BJ (cell line): ENCODE measurements at regions of chr16 and their contacts with region 1.

Region 1: GRCh38 chr16:3059000-3059722 is 6.3 kb upstream of the IL32 start:
- DNase-seq: peak; percentile 41
- H3K4me3 ChIP-seq: peak overlapping the region; percentile 98
- H3K27me3 ChIP-seq: no peaks in the 10 kb centered on the region
- CTCF ChIP-seq: peak; percentile 51

Region 2: DNA sequence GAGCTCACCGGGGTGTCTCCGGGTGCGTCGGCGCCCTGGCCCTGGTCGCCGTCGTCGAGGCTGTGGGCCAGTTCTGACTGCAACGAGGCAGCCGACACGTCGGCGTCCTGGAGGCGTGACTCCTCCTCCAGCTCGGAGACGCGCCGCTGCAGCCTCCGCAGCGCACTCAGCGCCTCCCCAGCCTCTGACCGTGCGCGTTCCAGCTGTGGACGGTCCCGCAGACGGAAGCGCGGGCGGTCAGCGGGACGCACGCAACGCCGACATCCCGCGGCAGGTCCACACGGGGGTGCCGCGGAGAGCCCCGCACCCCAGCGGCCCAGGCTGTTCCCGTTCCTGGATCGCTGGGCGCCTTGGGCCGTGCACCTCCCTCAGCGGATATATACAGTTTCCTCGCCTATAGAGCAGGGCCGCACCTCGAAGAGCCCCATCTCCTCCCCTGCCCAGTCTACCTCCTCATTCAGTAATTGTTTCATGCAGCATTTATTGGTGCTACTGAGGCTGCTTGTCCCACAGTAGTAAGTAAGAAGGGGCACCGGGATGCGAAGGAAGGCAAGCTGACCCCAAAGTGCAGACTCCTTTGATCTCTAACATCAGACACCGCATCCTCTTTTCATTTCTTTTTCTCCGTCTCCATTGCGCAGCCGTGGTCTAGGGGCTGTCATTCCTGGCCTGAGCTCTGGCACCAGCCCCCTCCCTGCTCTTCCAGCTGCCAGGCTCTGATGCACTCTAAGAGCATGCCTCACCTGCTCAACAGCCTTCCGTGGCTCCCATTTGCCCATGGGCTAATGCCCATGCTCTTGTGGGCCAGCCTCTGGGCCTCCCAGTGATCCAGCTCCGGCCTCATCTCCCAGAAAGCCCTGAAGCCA is 29.4 kb before region 1 on chr16:
- CTCF ChIA-PET with region 1: interaction called, 14 read pairs
- POLR2A ChIA-PET with region 1: no interaction called
- DNase-seq: no peak
- H3K4me3 ChIP-seq: no peak overlapping the region
- H3K27me3 ChIP-seq: peaks cover 16% of the 10 kb centered on the region
- CTCF ChIP-seq: no peak

Region 3: GRCh38 chr16:3045357-3045728 is 13.8 kb before region 1 on chr16:
- CTCF ChIA-PET with region 1: interaction called, 39 read pairs
- POLR2A ChIA-PET with region 1: no interaction called
- DNase-seq: no peak
- H3K4me3 ChIP-seq: peak overlapping the region; percentile 38
- H3K27me3 ChIP-seq: peaks cover 34% of the 10 kb centered on the region
- CTCF ChIP-seq: no peak

Region 4: GRCh38 chr16:3134564-3135417 is 75.6 kb after region 1 on chr16 and contains the start of gene ZNF213:
- CTCF ChIA-PET with region 1: interaction called, 56 read pairs
- POLR2A ChIA-PET with region 1: no interaction called
- DNase-seq: peak; percentile 95
- H3K4me3 ChIP-seq: peak within 1 kb of the TSS; percentile 99
- H3K27me3 ChIP-seq: no peaks in the 10 kb centered on the region
- CTCF ChIP-seq: no peak
- polyA plus RNA-seq, gene ZNF213: 0.63 and 0.77 TPM in 2 replicates

Region 5: GRCh38 chr16:3173892-3174617 is 114.9 kb after region 1 on chr16:
- CTCF ChIA-PET with region 1: interaction called, 15 read pairs
- POLR2A ChIA-PET with region 1: no interaction called
- DNase-seq: no peak
- H3K4me3 ChIP-seq: no peak overlapping the region
- H3K27me3 ChIP-seq: peaks cover 9% of the 10 kb centered on the region
- CTCF ChIP-seq: peak; percentile 26